ENCODE measurements at regions of chr6 and their contacts with region 1.

Region 1: DNA sequence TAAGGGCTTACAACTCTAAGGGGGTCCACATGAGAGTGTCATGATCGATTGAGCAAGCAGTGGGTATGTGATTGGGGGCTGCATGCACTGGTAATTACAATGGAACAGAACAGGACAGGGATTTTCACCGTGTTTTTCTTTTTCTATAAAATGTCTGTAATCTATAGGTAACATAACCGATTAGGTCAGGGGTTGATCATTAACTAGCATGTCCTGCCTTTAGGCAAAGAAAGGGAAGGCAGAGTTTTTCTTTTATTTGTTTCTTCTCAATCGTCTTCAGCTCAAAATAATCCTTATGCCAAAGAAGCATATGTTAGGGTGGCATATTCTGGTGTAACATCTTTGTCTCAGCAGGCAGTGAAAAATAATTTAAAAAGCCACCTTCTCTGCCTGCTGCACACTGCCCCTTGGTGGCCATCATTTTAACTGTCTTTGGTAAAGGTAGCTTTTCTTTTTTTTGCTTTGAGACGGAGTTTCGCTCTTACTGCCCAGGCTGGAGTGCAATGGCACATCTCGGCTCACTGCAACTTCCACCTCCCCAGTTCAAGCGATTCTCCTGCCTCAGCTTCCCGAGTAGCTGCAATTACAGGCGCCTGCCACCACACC is 9.7 kb upstream of the CEP43 start:
- DNase-seq: peak in 1 of 2 donors; percentile 48
- H3K4me3 ChIP-seq: no peak overlapping the region
- H3K27ac ChIP-seq: no peak overlapping the region
- H3K4me1 ChIP-seq: peaks cover 7 to 9% of the 10 kb centered on the region in 2 donors
- H3K27me3 ChIP-seq: no peaks in the 10 kb centered on the region
- CTCF ChIP-seq: peak in 4 of 6 experiments; percentile 30 to 77 (median 58)
- POLR2A ChIP-seq: no peak

Region 2: GRCh38 chr6:166786704-166787293 is 202.7 kb before region 1 on chr6:
- intact Hi-C with region 1: loop called (anchors 5 kb)
- DNase-seq: peak; percentile 5 to 9
- H3K4me3 ChIP-seq: no peak overlapping the region
- H3K27ac ChIP-seq: no peak overlapping the region
- H3K4me1 ChIP-seq: no peaks in the 10 kb centered on the region
- H3K27me3 ChIP-seq: no peaks in the 10 kb centered on the region
- CTCF ChIP-seq: peak; percentile 52 to 80 (median 66)
- POLR2A ChIP-seq: no peak